Activated CD4-positive, alpha-beta T cell treated with anti-CD3 and anti-CD28 coated beads for 36 hours (primary cell): ENCODE measurements at regions of chr9 and their contacts with region 1.

Region 1: GRCh38 chr9:37302277-37302676 is 120.2 kb upstream of the GRHPR start:
- DNase-seq: peak; percentile 61
- ATAC-seq: peak; percentile 90
- H3K4me3 Mint-ChIP-seq: peak overlapping the region; percentile 51
- H3K27ac Mint-ChIP-seq: peak overlapping the region; percentile 87
- H3K4me1 Mint-ChIP-seq: peaks cover 51% of the 10 kb centered on the region
- H3K27me3 Mint-ChIP-seq: no peaks in the 10 kb centered on the region

Region 2: GRCh38 chr9:36862206-36863145 is 439.8 kb before region 1 on chr9:
- CTCF ChIA-PET with region 1: no interaction called
- POLR2A ChIA-PET with region 1: no interaction called
- intact Hi-C with region 1: no loop called
- DNase-seq: peak; percentile 31
- ATAC-seq: no peak
- H3K4me3 Mint-ChIP-seq: no peak overlapping the region
- H3K27ac Mint-ChIP-seq: no peak overlapping the region
- H3K4me1 Mint-ChIP-seq: no peaks in the 10 kb centered on the region
- H3K27me3 Mint-ChIP-seq: peaks cover 4% of the 10 kb centered on the region

Region 3: DNA sequence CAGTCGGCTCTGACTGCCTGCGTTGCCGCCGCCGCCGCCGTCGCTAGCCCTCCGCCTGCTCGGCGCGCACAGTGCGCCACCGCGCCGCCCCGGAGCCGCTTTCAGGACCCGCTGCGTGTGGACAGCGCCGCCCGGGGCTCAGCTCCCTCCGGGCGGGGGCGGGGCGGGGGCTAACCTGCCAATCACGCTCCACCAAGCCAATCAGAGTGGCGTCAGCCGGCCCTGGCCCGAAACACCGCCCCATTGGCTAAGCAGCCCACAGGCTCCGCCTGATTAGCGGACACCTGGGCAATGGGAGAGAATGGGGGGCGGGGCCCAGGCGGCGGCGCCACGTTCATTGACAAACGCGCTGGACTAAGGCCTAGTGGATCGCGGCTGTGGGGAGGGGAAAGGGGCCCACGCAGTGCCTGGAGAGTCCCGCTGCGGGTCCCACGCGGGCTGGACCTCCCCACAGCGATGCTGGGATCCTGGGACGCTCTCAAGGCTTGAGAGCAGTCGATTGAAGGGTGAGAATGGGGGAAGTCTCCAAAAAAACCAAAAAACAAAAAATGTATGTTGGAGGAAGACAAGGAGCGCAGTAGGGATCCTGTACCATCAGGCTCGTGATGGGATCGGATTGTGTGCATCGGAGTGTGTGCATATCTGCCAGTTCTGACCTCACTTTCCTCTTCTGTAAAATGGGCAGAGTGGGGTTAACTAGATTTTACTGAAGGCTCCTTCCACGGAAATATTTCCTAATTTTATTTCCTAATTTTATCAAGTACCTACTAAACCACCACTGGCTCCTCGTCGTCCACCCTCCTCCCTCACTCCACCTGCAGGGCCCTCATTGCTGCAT is 274.5 kb before region 1 on chr9:
- CTCF ChIA-PET with region 1: interaction called, 3 read pairs
- POLR2A ChIA-PET with region 1: no interaction called
- intact Hi-C with region 1: loop called in 1 of 2 experiments (anchors 2 kb)
- DNase-seq: peak; percentile 96
- ATAC-seq: peak; percentile 97
- H3K4me3 Mint-ChIP-seq: peak overlapping the region; percentile 64
- H3K27ac Mint-ChIP-seq: no peak overlapping the region
- H3K4me1 Mint-ChIP-seq: peaks cover 37% of the 10 kb centered on the region
- H3K27me3 Mint-ChIP-seq: peaks cover 80% of the 10 kb centered on the region

Region 4: DNA sequence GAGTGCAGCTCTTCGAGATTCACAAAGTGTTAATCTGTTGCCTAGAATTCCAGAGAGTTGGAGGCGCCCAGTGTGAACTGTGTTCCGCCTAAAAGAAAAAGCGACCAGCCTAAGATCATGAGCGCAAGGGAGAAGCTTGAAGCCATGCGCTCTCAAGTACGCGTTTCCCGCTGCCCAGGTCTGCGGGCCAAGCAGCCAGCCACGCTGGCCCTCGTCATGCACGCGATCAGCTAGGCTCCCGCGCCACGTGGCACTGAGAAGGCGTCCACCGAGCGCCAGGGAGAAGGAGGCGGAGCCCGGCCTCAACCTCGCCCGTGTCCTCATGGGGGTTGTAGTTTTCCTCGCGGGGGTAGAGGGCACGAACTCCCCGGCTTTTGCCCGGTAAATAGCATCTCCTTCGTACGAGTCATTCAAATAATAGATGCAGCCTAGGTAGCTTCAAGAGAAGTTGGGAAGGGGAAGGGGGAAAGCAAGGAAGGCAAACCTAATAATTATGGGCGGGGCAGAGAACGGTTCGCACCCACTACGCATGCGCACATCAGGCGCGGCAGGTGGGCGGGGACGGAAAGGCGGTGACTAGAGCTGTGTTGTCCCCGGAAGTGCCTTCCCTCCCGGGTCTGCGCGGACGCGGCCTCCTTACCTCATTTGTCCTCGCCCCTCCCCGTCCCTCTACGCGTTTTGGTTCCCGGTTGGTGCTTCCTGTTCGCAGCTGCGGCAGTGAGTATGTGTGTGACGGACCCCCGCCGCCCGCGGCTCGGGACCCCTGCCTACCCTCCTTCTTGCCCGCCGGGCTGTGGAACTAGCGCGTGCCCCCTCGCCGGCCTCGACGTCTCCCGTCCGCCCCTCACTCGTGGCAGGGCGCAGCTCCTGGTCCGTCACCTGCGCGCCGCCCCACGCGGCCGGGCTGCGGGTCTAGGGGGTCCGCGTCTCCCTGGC is 182.1 kb before region 1 on chr9 and contains the start of gene ZCCHC7:
- CTCF ChIA-PET with region 1: no interaction called
- POLR2A ChIA-PET with region 1: no interaction called
- intact Hi-C with region 1: loop called (anchors 1 to 5 kb)
- DNase-seq: peak; percentile 98
- ATAC-seq: peak; percentile 98
- H3K4me3 Mint-ChIP-seq: peak within 1 kb of the TSS; percentile 80
- H3K27ac Mint-ChIP-seq: peak within 1 kb of the TSS; percentile 96
- H3K4me1 Mint-ChIP-seq: peaks cover 31% of the 10 kb centered on the region
- H3K27me3 Mint-ChIP-seq: no peaks in the 10 kb centered on the region
- total RNA-seq, gene ZCCHC7: 29.9 to 50.2 TPM

Region 5: GRCh38 chr9:37348917-37349316 is 46.6 kb after region 1 on chr9:
- CTCF ChIA-PET with region 1: no interaction called
- POLR2A ChIA-PET with region 1: interaction called, 10 read pairs
- intact Hi-C with region 1: no loop called
- DNase-seq: no peak
- ATAC-seq: no peak
- H3K4me3 Mint-ChIP-seq: no peak overlapping the region
- H3K27ac Mint-ChIP-seq: no peak overlapping the region
- H3K4me1 Mint-ChIP-seq: no peaks in the 10 kb centered on the region
- H3K27me3 Mint-ChIP-seq: no peaks in the 10 kb centered on the region

Region 6: DNA sequence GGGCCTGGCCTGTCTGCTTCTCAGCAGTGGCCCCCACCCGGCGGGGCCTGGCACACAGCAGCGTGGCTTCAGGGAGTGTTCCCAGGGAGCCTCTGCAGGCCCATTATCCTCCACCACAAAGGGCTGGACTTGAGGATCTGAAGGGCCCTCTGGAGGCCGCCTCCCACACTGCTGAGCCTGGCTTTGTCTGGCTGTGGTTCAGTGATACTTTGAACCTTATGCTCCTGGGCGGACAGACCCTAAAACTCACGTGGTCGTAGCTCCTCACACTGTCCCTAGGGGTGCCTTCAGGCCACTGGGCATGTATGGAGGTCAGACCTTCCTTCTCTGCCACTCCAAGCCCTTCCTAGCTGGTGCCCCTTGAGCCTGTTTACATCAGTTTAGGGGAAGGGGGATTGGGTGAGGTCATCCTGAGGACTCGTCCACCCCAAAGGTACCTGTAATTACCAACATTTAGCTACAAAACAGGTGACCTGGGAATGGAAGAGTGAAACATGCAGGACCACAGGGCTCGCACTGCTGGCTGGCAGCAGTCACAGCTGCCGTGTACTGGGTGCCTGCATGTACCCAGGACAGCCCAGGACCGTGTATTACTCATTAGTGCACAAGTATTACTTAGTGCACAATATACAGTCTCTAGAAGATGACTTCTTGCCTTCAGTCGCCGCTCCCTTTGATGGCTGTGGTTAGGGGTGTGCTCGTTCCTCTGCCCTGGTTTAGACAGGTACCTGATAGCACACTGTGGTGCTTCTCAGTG is 128.7 kb after region 1 on chr9:
- CTCF ChIA-PET with region 1: no interaction called
- POLR2A ChIA-PET with region 1: no interaction called
- intact Hi-C with region 1: no loop called
- DNase-seq: no peak
- ATAC-seq: no peak
- H3K4me3 Mint-ChIP-seq: no peak overlapping the region
- H3K27ac Mint-ChIP-seq: no peak overlapping the region
- H3K4me1 Mint-ChIP-seq: peaks cover 4% of the 10 kb centered on the region
- H3K27me3 Mint-ChIP-seq: no peaks in the 10 kb centered on the region